SK-N-SH (cell line): ENCODE measurements at regions of chr12 and their contacts with region 1.

Region 1: GRCh38 chr12:44942714-44943113 is 66.6 kb upstream of the NELL2 start:
- DNase-seq: no peak
- H3K4me3 ChIP-seq: no peak overlapping the region
- H3K27ac ChIP-seq: no peak overlapping the region
- H3K4me1 ChIP-seq: no peaks in the 10 kb centered on the region
- H3K27me3 ChIP-seq: no peaks in the 10 kb centered on the region
- CTCF ChIP-seq: no peak
- EP300 ChIP-seq: no peak
- RAD21 ChIP-seq: no peak

Region 2: DNA sequence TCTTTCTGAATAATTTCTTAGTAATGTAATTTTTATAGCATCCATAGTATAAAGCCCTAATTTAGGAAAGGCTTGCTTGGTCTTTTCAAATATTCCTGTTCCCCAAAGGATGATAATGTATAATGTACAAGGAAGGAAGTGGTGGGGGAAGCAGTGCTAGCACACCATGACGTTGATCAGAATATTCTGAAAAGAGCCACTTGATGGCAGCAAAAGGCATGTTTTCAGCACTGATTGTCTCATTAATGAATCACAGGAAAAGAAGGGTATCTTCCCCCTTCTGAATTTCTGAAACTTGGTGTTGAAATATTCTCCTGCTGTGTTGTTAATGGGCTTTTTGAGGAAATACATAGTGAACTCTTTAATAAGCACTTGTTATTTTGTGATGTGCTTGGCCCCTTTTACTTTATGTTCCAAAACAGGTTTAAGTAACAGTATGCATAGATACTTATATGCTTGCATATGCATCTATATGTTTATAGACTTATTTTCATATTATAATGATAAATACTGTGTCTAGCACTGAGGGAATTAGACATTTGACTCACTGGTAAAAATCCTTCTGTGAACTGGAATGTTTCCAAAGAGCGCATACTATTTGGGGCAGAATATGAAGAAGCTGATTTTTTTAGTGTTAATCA is 984.9 kb before region 1 on chr12:
- CTCF ChIA-PET with region 1: interaction called, 10 read pairs
- POLR2A ChIA-PET with region 1: no interaction called
- DNase-seq: peak; percentile 52
- H3K4me3 ChIP-seq: no peak overlapping the region; a peak in 1 of 4 replicates
- H3K27ac ChIP-seq: no peak overlapping the region
- H3K4me1 ChIP-seq: peaks cover 0 to 6% of the 10 kb centered on the region in 2 experiments; a peak in 1 of 4 replicates
- H3K27me3 ChIP-seq: no peaks in the 10 kb centered on the region
- CTCF ChIP-seq: peak; percentile 69
- EP300 ChIP-seq: no peak
- RAD21 ChIP-seq: peak; percentile 86